Thyroid gland (tissue), 4 donors: ENCODE measurements at regions of chr15 and their contacts with region 1.

Region 1: DNA sequence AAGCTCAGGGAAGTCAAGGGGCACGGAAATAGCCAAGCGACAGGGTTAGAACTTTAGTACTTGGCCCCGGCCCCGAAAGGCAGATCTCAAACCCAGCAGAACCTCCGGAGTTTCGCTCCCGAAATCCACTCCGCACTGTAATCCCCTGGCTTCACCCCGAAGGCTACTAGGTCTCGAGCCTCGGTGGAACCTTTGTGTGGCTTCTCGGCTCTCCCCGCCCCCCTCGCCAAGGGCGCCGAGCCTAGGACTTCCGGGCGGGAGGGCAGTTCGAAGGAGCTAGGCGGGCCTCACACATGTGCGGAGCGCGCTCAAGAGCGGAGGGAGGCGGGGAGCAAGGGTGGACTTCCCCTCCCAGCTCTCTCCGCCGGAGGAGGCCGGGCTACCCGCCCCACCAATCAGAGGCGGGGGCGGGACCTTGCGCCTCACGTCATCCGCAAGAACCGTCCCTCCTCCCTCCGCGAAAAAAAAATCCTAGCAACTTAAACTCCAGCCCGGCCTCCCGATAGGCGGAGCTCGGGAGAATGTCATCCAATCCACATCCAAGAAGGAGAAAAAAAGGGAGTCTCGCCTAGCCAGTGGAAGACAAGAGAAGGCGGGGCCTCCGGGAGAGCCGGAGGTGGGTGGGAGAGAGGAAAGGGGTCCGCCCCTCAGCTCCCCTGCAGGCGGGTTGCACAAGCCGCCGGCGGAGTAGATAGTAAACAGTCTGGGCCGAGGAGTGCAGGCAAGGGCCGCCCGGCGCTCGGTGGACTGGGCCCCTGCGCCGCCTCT is 2.4 kb upstream of the SIN3A start:
- DNase-seq: peak; percentile 98 to 99
- H3K4me3 ChIP-seq: peak overlapping the region in 2 of 3 donors; percentile 42 to 78
- H3K27ac ChIP-seq: peak overlapping the region; percentile 85 to 98 (median 97)
- H3K4me1 ChIP-seq: peaks cover 16 to 17% of the 10 kb centered on the region in 2 donors
- H3K27me3 ChIP-seq: no peaks in the 10 kb centered on the region
- CTCF ChIP-seq: no peak
- POLR2A ChIP-seq: peak in 1 of 2 donors; percentile 68

Region 2: GRCh38 chr15:75367913-75368688 is 85.8 kb before region 1 on chr15 and contains the start of gene MAN2C1:
- intact Hi-C with region 1: loop called (anchors 5 kb)
- DNase-seq: peak; percentile 98
- H3K4me3 ChIP-seq: peak within 1 kb of the TSS; percentile 58 to 88 (median 87)
- H3K27ac ChIP-seq: peak within 1 kb of the TSS; percentile 88 to 95 (median 91)
- H3K4me1 ChIP-seq: peaks cover 13 to 18% of the 10 kb centered on the region in 2 donors
- H3K27me3 ChIP-seq: no peaks in the 10 kb centered on the region
- CTCF ChIP-seq: peak in 5 of 6 experiments; percentile 10 to 88 (median 78)
- POLR2A ChIP-seq: peak; percentile 46 to 90
- total RNA-seq, gene MAN2C1: 200 to 357 (median 226) TPM

Region 3: DNA sequence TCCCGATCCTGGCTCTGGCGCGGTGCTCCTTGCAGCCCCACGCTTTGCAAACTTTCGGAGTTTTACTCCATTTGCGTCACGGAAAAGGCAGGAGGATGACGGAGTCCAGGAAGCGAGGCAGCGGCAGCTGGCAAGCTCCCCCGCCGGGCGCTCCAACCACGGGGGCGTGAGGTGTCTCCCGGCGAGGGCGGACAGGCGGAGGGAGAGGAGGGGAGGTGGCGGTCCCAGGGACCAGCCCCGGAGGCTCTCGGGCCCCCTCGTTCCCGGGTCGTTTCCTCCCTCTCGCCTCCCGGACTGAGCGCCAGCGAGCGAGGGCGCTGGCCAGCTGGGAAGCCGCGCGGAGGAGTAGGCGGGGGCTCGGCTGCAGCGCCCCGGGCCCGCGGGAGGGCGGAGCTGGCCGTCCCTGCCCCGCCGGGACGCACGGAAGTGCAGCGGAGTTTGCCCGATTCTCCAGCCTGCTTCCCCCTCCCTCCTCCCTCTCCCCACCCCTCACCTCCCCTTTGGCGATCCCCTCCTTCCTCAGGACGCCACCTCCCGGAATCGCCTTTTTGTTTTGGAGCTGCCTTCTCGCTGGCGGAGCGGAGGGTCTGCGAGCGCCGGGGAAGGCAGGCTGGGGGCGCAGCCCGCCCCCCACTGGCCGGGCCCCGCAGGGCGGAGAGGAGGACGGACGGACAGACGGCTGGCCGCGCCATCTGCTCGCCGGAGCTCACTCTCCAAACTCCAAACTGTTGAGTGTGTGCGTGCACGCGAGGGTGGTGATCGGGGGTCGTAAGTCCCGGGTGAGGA is 193.7 kb after region 1 on chr15 and contains the start of gene SNX33:
- intact Hi-C with region 1: loop called (anchors 5 kb)
- DNase-seq: peak; percentile 81 to 82
- H3K4me3 ChIP-seq: peak within 1 kb of the TSS; percentile 83 to 90 (median 87)
- H3K27ac ChIP-seq: peak within 1 kb of the TSS; percentile 55 to 96 (median 82)
- H3K4me1 ChIP-seq: peaks cover 41 to 53% of the 10 kb centered on the region in 2 donors
- H3K27me3 ChIP-seq: no peaks in the 10 kb centered on the region
- CTCF ChIP-seq: peak in 4 of 6 experiments; percentile 31 to 47 (median 42)
- POLR2A ChIP-seq: peak; percentile 68 to 89
- total RNA-seq, gene SNX33: 22.8 to 28.7 (median 26.5) TPM